ENCODE measurements at regions of chr1 and their contacts with region 1.

Region 1: GRCh38 chr1:151443846-151444782 is 15.2 kb downstream of the POGZ start:
- DNase-seq: peak; percentile 38
- ATAC-seq: peak; percentile 94
- H3K4me3 ChIP-seq: 0 out of 2 replicates have a peak overlapping the region, but pooled peaks have one; percentile 5
- H3K27ac ChIP-seq: peak overlapping the region; percentile 40; the same call in 1 of the 2 replicates
- H3K4me1 ChIP-seq: peaks cover 15% of the 10 kb centered on the region
- H3K27me3 ChIP-seq: no peaks in the 10 kb centered on the region
- CTCF ChIP-seq: peak; percentile 63 to 86 (median 78)
- EP300 ChIP-seq: no peak
- POLR2A ChIP-seq: no peak
- RAD21 ChIP-seq: peak; percentile 79

Region 2: GRCh38 chr1:151465026-151465425 is 20.9 kb after region 1 on chr1:
- CTCF ChIA-PET with region 1: interaction called, 11 read pairs
- POLR2A ChIA-PET with region 1: no interaction called
- RAD21 ChIA-PET with region 1: interaction called, 3 read pairs
- SMC1A ChIA-PET with region 1: interaction called, 6 read pairs
- in situ Hi-C with region 1: no loop called
- intact Hi-C with region 1: no loop called
- DNase-seq: no peak
- ATAC-seq: no peak
- H3K4me3 ChIP-seq: no peak overlapping the region
- H3K27ac ChIP-seq: no peak overlapping the region
- H3K4me1 ChIP-seq: peaks cover 1% of the 10 kb centered on the region
- H3K27me3 ChIP-seq: no peaks in the 10 kb centered on the region
- CTCF ChIP-seq: no peak
- EP300 ChIP-seq: no peak
- POLR2A ChIP-seq: no peak
- RAD21 ChIP-seq: no peak

Region 3: DNA sequence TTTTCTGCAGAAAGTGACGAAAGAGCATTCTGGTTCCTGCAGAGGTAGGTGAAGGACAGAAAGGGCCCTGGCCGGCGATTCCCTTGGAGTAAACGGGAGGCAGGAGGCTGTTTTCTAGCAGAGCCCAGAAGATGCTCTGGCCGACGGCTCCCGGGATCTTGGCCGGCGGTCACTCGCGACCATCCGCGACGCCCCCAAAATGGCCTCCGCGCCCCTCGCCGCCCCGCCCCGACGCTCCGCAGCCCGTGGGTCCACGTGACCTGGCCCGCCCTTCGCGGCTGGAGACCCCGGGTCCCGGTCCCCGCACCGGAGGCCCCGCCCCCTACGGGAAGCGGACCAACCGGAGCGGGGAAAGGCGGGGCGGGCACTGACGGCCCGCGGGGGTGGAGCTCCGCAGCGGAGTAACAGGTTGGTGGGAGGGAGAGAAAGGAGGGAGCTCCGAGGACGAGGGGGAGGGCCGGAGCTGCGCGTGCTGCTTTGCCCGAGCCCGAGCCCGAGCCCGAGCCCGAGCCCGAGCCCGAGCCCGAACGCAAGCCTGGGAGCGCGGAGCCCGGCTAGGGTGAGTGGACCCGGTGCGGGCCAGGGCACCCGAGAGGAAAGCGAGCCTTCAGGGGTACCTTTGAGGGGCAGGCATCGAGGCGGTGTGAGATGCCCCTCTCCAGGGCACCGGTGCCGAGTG is 67.0 kb after region 1 on chr1 and contains the start of gene CGN:
- CTCF ChIA-PET with region 1: no interaction called
- POLR2A ChIA-PET with region 1: no interaction called
- RAD21 ChIA-PET with region 1: interaction called, 4 read pairs
- SMC1A ChIA-PET with region 1: interaction called, 5 read pairs
- in situ Hi-C with region 1: loop called (anchors 5 kb)
- intact Hi-C with region 1: loop called (anchors 5 kb)
- DNase-seq: no peak
- ATAC-seq: peak; percentile 94
- H3K4me3 ChIP-seq: peak within 1 kb of the TSS; percentile 65
- H3K27ac ChIP-seq: no peak within 1 kb of the TSS
- H3K4me1 ChIP-seq: peaks cover 23% of the 10 kb centered on the region
- H3K27me3 ChIP-seq: peaks cover 6 to 7% of the 10 kb centered on the region in 2 experiments
- CTCF ChIP-seq: no peak
- EP300 ChIP-seq: no peak
- POLR2A ChIP-seq: peak; percentile 39; the same call in 1 of the 2 replicates
- RAD21 ChIP-seq: no peak
- polyA plus RNA-seq, gene CGN: 0.47 to 1.8 TPM

Region 4: GRCh38 chr1:151653397-151653796 is 209.3 kb after region 1 on chr1:
- CTCF ChIA-PET with region 1: no interaction called
- POLR2A ChIA-PET with region 1: no interaction called
- RAD21 ChIA-PET with region 1: no interaction called
- SMC1A ChIA-PET with region 1: no interaction called
- in situ Hi-C with region 1: no loop called
- intact Hi-C with region 1: no loop called
- DNase-seq: no peak
- ATAC-seq: no peak
- H3K4me3 ChIP-seq: no peak overlapping the region
- H3K27ac ChIP-seq: no peak overlapping the region
- H3K4me1 ChIP-seq: 0 out of 2 replicates have a peak, but pooled peaks cover 3% of the 10 kb centered on the region
- H3K27me3 ChIP-seq: no peaks in the 10 kb centered on the region
- CTCF ChIP-seq: no peak
- EP300 ChIP-seq: no peak
- POLR2A ChIP-seq: no peak
- RAD21 ChIP-seq: no peak

Region 5: GRCh38 chr1:151728151-151729054 is 284.3 kb after region 1 on chr1:
- CTCF ChIA-PET with region 1: no interaction called
- POLR2A ChIA-PET with region 1: no interaction called
- RAD21 ChIA-PET with region 1: interaction called, 4 read pairs
- SMC1A ChIA-PET with region 1: interaction called, 10 read pairs
- in situ Hi-C with region 1: no loop called
- intact Hi-C with region 1: no loop called
- DNase-seq: no peak
- ATAC-seq: no peak
- H3K4me3 ChIP-seq: no peak overlapping the region
- H3K27ac ChIP-seq: no peak overlapping the region
- H3K4me1 ChIP-seq: no peaks in the 10 kb centered on the region
- H3K27me3 ChIP-seq: no peaks in the 10 kb centered on the region; a peak in 1 of 4 replicates
- CTCF ChIP-seq: no peak
- EP300 ChIP-seq: no peak
- POLR2A ChIP-seq: no peak
- RAD21 ChIP-seq: no peak

Region 6: DNA sequence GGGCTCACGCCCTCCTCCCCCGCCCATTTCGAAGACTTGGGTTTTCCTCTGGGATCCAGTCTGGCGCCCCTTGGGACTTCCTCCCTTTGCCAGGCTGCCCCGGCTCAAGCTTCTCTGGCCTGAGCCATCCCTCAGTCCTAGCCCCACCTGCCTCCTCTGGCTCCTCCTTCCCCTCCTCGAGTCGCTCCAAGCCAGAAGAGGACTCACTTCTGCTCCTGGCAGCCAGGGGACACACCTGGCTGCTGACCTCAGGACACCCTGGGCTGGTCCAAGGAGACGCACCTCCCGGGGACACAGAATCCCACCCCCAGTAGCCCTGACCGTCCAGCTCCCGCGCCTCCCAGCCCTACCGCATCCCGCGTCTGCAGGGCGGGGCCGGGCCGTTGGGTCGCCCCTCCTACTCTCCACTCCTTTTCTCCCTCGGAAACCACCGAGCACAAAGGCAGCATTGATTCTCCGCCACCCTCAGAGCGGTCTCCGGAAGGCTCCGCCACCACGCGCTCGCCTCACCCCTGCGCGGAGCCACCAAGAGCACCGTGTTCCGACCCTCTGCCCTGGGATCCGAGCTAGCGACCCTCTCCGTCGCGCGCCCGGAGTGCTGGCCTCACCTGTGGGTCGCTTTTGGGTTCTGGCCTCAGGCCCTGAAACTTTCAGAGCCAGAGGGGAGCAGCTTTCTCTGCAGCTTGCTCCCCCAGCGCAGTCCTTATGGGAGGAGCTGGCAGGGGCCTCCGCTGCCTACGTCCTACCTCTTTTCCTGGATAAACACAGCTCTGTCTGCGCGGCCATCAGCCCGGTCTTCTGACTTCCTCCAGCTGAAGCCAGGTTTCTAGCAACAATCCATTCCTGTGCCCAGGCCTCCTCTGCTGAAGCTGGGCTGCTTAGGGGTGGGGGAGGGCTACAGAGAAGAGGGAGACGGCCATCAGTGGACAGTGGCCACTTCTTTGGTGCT is 395.6 kb after region 1 on chr1 and contains the start of gene C2CD4D:
- CTCF ChIA-PET with region 1: interaction called, 9 read pairs
- POLR2A ChIA-PET with region 1: no interaction called
- RAD21 ChIA-PET with region 1: interaction called, 10 read pairs
- SMC1A ChIA-PET with region 1: interaction called, 7 read pairs
- in situ Hi-C with region 1: loop called (anchors 10 kb)
- intact Hi-C with region 1: loop called (anchors 1 kb)
- DNase-seq: peak; percentile 9
- ATAC-seq: peak; percentile 84
- H3K4me3 ChIP-seq: peak within 1 kb of the TSS; percentile 42; the same call in 1 of the 2 replicates
- H3K27ac ChIP-seq: peak within 1 kb of the TSS; percentile 26; the same call in 1 of the 2 replicates
- H3K4me1 ChIP-seq: peaks cover 10% of the 10 kb centered on the region; the same call in 1 of the 2 replicates
- H3K27me3 ChIP-seq: peaks cover 0 to 8% of the 10 kb centered on the region in 2 experiments
- CTCF ChIP-seq: no peak
- EP300 ChIP-seq: no peak
- POLR2A ChIP-seq: peak; percentile 66
- RAD21 ChIP-seq: no peak
- polyA plus RNA-seq, gene C2CD4D: 0.03 TPM in 1 of 2 experiments, not detected in the other